Transverse colon (tissue), 4 donors: ENCODE measurements at regions of chr1 and their contacts with region 1.

Region 1: DNA sequence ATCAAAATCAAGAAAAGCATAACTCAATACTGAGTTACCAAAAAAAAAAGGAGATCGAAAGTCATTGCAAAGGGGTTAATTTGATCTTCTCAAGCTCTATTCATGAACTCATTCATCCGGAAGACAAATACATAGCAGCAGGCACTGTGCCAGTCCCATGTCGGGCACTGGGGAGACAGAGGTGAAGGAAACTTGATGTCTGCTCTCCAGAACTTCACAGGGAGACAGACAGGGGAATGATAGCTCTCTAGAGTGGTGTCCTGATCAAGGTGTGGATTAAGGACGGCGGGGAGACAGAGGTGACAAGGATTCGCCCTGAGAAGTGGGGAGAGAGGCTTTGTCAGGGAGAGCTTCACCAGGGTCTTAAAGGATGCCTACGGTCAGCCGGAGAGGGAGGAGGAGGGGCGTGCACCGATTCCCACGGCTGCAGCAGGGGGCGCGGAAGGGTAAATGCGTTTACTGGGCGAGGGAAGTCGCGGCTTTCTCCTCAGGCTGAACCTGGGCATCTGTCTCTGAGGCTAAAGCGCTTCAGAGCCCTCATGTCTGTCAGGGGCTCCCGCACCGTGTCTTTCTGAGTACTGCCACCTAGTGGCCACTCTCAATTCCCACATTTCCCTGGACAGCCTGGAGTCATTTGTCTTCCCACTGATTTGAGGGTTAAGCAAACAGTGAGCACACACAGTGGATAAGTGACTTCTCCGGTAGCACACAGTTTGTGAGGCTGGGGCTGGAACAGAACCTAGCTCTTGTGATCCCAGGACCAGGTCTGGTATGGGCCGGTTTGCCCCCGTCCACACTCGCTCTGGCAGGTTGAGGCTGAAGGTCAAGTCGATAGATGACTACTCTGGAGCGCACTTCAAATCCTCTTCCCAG is 152.8 kb downstream of the TENT5C start:
- DNase-seq: peak; percentile 78
- H3K4me3 ChIP-seq: peak overlapping the region in 3 of 4 donors; percentile 27 to 44 (median 32)
- H3K27ac ChIP-seq: peak overlapping the region in 3 of 4 donors; percentile 13 to 44 (median 27)
- H3K4me1 ChIP-seq: peaks cover 3 to 24% (median 10%) of the 10 kb centered on the region in 4 donors
- H3K27me3 ChIP-seq: no peaks in the 10 kb centered on the region
- CTCF ChIP-seq: peak; percentile 83 to 88 (median 84)
- EP300 ChIP-seq: no peak
- POLR2A ChIP-seq: no peak

Region 2: GRCh38 chr1:117512743-117513321 is 245.8 kb before region 1 on chr1:
- in situ Hi-C with region 1: no loop called
- intact Hi-C with region 1: loop called (anchors 5 kb)
- DNase-seq: no peak
- H3K4me3 ChIP-seq: no peak overlapping the region
- H3K27ac ChIP-seq: no peak overlapping the region
- H3K4me1 ChIP-seq: no peaks in the 10 kb centered on the region
- H3K27me3 ChIP-seq: no peaks in the 10 kb centered on the region
- CTCF ChIP-seq: peak; percentile 48 to 67 (median 59)
- EP300 ChIP-seq: no peak
- POLR2A ChIP-seq: no peak

Region 3: GRCh38 chr1:117527566-117528102 is 231.0 kb before region 1 on chr1:
- in situ Hi-C with region 1: loop called in 3 of 4 experiments (anchors 10 kb)
- intact Hi-C with region 1: no loop called
- DNase-seq: no peak
- H3K4me3 ChIP-seq: no peak overlapping the region
- H3K27ac ChIP-seq: no peak overlapping the region
- H3K4me1 ChIP-seq: peaks cover 0 to 9% (median 6%) of the 10 kb centered on the region in 4 donors
- H3K27me3 ChIP-seq: no peaks in the 10 kb centered on the region
- CTCF ChIP-seq: no peak
- EP300 ChIP-seq: no peak
- POLR2A ChIP-seq: no peak

Region 4: GRCh38 chr1:117534995-117535467 is 223.6 kb before region 1 on chr1:
- in situ Hi-C with region 1: loop called in 1 of 4 experiments (anchors 10 kb)
- intact Hi-C with region 1: loop called (anchors 5 kb)
- DNase-seq: peak; percentile 27
- H3K4me3 ChIP-seq: no peak overlapping the region
- H3K27ac ChIP-seq: no peak overlapping the region
- H3K4me1 ChIP-seq: peaks cover 0 to 12% (median 0%) of the 10 kb centered on the region in 4 donors
- H3K27me3 ChIP-seq: no peaks in the 10 kb centered on the region
- CTCF ChIP-seq: peak; percentile 61 to 74 (median 70)
- EP300 ChIP-seq: no peak
- POLR2A ChIP-seq: no peak

Region 5: DNA sequence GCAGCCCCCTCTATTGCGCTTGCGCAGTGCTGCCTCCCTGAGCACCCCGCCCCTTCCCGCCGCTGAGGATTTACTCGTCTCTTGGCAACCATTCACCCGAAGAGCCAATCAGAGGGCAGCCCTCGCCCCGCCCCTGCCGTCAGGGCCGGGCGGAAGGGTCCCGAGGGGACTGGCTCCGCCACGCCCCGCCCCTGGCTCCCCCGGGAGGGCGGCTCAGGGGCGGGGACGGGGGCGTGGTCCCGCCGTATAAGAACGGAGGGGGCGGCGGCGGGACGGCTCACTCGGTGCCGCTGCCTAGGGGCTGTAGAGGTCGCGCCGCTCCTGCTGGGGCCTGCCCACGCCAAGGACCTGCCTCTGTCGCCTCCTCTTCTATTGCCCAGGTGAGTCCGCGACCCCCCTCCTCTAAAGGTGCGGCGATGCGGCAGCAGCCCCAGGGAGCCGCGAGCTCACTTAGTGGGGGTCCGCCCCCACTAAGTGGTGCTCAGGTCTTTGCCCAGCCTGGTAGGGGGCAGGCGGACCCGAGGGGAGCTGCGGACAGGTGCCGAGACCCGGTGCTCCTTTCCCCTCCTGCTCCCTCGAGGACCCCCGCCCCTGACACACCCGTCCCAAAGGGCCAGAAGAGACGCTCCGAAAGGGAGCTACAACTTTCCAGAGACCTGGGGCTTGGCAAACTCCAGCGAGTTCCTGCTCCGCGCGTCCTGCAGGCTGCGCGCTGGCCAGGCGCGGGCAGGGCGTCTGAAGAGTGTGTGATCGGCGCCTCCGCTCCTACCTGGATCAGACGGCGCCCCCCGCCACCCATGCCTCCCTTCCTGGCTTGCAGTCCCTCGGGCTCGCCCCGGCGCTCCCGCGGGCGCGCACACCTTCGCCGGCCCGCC is 152.7 kb before region 1 on chr1 and contains the start of gene TENT5C:
- in situ Hi-C with region 1: no loop called
- intact Hi-C with region 1: loop called (anchors 10 kb)
- DNase-seq: peak; percentile 99
- H3K4me3 ChIP-seq: peak within 1 kb of the TSS; percentile 59 to 92 (median 76)
- H3K27ac ChIP-seq: peak within 1 kb of the TSS; percentile 91 to 97 (median 93)
- H3K4me1 ChIP-seq: peaks cover 2 to 42% (median 23%) of the 10 kb centered on the region in 4 donors
- H3K27me3 ChIP-seq: no peaks in the 10 kb centered on the region
- CTCF ChIP-seq: no peak
- EP300 ChIP-seq: peak; percentile 10
- POLR2A ChIP-seq: peak; percentile 97
- total RNA-seq, gene TENT5C: 3.4 to 30.8 (median 18.1) TPM

Region 6: GRCh38 chr1:117695796-117696490 is 62.7 kb before region 1 on chr1:
- in situ Hi-C with region 1: no loop called
- intact Hi-C with region 1: no loop called
- DNase-seq: no peak
- H3K4me3 ChIP-seq: no peak overlapping the region
- H3K27ac ChIP-seq: peak overlapping the region; percentile 69 to 86 (median 81)
- H3K4me1 ChIP-seq: peaks cover 0 to 17% (median 5%) of the 10 kb centered on the region in 4 donors
- H3K27me3 ChIP-seq: no peaks in the 10 kb centered on the region
- CTCF ChIP-seq: no peak
- EP300 ChIP-seq: no peak
- POLR2A ChIP-seq: no peak